ENCODE measurements at regions of chrX and their contacts with region 1.

Region 1: GRCh38 chrX:378443-378842 is 8.3 kb downstream of the PPP2R3B start:
- DNase-seq: no peak

Region 2: DNA sequence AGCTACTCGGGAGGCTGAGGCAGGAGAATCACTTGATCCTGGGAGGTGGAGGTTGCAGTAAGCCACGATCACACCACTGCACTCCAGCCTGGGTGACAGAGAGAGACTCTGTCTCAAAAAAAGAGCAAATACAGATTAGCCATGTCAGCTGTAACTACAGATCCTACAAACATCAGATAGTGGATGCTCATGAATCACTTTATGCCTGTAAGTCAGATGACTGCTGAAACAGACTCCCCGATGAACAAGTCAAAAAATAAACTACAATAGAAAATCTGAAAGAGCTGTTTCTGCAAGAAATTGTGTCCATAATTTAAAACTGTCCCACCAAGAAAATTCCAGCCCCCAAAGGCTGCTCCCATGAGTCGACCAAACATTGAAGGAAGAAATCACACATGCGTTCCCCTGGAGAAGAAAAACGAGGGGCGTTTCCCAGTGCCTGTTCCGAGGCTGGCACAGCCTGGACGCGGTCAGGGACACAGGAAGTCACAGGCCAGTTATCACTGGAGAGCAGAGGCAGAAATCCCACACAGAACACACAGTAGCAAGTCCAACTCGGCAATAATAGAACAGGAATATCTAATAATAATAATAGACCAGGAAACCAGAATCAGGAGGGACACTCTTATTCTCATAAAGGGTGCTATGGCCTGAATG is 29.9 kb before region 1 on chrX:
- intact Hi-C with region 1: loop called in 1 of 2 experiments (anchors 1 kb)
- DNase-seq: peak; percentile 37